GM23248 (cell line): ENCODE measurements at regions of chr3 and their contacts with region 1.

Region 1: DNA sequence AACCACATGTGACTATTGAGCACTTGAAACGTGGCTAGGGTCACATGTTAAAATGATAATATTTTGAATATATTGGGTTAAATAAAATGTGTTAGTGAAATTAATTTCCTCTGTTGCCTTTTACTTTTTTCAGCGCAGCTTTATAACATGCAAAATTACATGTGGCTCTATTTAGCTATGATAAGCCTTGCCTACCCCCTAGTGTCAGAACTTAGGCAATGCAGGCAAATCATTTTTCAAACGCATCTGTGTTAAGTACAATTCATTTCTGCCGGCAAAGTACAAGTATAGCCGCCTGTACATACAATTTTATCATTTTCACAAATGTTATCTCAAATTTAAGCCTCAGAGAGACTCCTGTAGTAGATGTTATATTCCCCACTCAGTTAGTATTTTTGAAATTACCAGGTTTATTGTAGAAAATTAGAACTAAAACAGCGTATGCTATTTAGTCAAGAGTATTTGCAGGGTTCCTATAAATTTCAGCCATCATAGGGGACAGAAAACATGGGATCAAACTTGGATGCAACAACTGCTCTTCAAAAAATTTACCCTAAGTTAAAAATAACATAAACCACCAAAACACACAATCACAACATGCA is 56.1 kb downstream of the TAFA4 start:
- DNase-seq: peak; percentile 74
- H3K4me3 ChIP-seq: no peak overlapping the region
- H3K27ac ChIP-seq: no peak overlapping the region
- H3K4me1 ChIP-seq: no peaks in the 10 kb centered on the region
- H3K27me3 ChIP-seq: peaks cover 21% of the 10 kb centered on the region

Region 2: DNA sequence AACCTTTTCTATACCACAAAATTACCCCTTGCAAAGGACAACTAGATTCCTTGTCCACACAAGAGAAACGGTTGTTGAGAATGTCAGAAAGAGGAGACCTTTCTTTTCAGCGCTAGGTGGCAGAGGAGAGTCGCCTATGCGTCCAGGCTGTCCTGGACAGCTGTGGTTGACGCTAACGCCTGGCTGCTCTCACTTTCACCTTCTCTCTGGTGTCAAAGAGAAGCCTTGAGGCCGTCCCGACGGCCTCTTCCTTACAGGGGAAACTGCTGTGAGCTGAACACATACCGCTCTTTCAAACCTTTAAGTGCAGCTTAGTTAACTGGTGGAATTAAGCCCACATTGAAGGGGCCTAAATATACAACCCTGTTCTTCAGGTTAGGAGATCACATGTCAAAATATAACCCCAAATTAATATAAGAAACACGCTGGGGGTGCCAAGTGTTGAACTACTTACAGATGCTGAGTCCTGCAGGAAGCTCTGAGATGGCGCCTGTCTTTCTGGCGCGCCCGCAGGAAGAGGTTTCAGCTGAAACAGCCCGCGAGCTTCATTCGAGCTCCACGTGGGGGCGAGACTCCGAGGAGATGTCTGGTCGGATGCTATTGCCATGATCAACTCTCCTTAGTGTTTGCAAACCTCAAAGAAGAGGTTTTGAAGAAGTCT is 1904.2 kb before region 1 on chr3:
- in situ Hi-C with region 1: loop called (anchors 25 kb)
- DNase-seq: peak; percentile 81
- H3K4me3 ChIP-seq: peak overlapping the region; percentile 71
- H3K27ac ChIP-seq: no peak overlapping the region
- H3K4me1 ChIP-seq: no peaks in the 10 kb centered on the region
- H3K27me3 ChIP-seq: peaks cover 14% of the 10 kb centered on the region

Region 3: GRCh38 chr3:67123914-67124313 is 1752.3 kb before region 1 on chr3:
- in situ Hi-C with region 1: loop called (anchors 10 kb)
- DNase-seq: no peak
- H3K4me3 ChIP-seq: no peak overlapping the region
- H3K27ac ChIP-seq: no peak overlapping the region
- H3K4me1 ChIP-seq: no peaks in the 10 kb centered on the region
- H3K27me3 ChIP-seq: no peaks in the 10 kb centered on the region

Region 4: DNA sequence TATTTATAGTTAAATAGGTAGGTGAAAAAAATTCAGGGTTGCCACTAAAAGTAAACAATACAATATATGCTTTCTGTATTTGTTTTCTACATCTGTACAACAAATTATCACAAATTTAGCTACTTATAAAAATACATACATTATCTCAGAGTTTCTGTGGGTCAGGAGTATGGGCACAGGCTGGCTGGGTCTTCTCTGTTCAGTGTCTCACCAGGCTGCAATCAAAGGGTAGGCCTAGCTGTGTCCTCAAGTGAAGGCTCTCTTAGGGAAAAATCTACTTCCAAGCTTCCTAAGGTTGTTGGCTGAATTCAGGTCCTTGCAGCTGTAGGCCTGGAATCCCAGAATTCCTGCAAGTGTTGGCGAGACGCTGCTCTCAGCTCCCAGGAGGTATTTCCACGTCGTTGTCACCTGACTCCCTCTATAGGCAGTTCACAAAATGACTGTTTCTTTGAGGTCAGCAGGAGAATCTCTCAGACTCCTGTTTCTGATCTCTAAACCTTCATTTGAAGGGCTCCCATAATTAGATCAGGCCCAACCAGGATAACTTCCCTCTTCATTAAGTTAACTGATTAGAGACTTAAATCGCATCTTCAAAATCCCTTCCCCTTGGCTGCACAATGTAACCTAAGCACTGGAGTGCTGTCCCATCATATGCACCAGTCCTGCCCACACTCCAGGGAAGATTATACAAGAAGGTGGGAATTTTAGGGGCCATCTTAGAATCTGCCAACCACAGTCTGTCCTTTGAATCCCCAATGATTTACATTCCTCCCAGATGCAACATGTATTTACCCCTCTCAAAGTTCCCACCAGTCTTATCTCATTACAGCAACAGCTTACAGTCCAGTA is 1518.4 kb before region 1 on chr3:
- in situ Hi-C with region 1: loop called (anchors 25 kb)
- DNase-seq: peak; percentile 59
- H3K4me3 ChIP-seq: no peak overlapping the region
- H3K27ac ChIP-seq: no peak overlapping the region
- H3K4me1 ChIP-seq: no peaks in the 10 kb centered on the region
- H3K27me3 ChIP-seq: no peaks in the 10 kb centered on the region